HepG2 (cell line): ENCODE measurements at regions of chr11 and their contacts with region 1.

Region 1: DNA sequence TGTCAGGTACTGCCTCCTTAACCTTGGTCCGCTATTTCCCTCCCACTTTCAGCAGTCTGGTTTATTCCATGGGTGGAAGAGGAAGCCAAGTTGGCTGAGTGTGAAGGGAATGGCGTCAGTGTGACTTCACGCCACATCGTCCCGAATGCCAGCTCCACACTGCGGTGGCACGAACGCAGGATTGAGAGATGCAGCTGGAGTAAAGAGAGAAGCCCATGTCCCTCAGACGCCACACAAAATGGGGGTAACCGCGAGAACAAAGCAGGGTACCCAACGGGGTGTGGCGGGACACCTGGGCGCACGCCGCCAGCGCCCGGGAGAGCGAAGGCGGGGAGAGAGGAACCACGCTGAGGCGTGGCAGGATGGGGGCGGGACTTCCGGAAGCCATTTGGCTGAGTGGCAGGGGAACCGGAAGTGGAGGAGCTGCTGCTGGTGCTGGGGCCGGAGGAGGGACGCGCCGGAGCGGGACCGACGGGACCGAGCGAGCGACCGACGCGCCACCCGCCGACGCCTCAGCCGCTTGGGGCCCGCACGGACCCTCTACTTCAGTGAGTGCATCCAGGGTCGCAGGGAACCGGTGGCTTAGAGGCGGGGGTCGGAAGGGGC is at the start of gene PAFAH1B2:
- DNase-seq: peak; percentile 88
- ATAC-seq: peak; percentile 96
- H3K4me3 ChIP-seq: peak within 1 kb of the TSS; percentile 86 to 97 (median 94)
- H3K27ac ChIP-seq: peak within 1 kb of the TSS; percentile 62
- H3K4me1 ChIP-seq: peaks cover 29% of the 10 kb centered on the region
- H3K27me3 ChIP-seq: no peaks in the 10 kb centered on the region; a peak in 1 of 5 replicates
- CTCF ChIP-seq: no peak; the same call in 1 of the 2 replicates
- EP300 ChIP-seq: peak in 1 of 2 experiments; percentile 15; a peak in 1 of 4 replicates
- POLR2A ChIP-seq: peak; percentile 56 to 94
- RAD21 ChIP-seq: no peak
- total RNA-seq, gene PAFAH1B2: 104 and 178 TPM in 2 replicates

Region 2: DNA sequence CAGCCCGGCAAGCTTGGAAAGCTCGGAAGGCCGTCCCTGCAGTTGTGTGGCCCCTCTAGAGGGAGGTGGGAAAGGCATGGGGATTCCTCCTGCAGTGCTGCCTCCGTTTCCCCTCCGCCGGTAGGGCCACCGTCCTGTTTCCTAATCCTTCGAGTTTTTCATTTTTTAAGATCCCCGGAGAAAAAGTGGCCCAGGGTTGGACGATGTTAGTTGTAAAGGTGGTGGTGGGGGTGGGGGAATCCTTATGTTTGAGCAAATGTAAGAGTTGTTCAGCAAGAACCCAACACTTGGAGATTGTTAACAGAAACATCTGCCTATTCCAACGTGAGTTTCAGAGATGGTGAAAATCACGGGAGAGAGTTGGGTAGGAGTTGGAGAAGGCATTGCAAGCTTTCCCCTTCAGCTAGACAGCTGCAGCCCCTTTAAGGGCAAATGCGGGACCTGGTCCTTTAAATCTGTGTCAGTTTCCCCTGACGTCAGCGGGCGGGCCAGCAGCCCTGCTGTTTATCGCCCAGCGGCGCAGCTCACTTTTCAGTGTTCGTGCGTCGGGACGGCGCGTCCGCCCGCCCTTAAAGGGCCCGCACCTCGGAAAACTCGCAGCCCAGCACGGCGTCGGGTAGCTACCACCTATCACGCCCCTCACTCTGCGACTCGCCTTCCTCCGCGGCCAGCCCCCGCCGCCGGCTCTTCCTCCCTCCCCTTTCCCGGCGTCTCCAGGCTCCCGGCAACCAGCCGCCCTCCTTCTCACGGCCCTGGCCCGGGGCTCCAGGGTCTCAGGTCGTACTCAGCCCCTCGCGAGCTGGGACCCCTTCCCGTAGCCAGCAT is 34.4 kb after region 1 on chr11 and contains the start of gene SIDT2:
- CTCF ChIA-PET with region 1: no interaction called
- POLR2A ChIA-PET with region 1: interaction called, 41 read pairs
- in situ Hi-C with region 1: no loop called
- intact Hi-C with region 1: no loop called
- DNase-seq: peak; percentile 83
- ATAC-seq: peak; percentile 90
- H3K4me3 ChIP-seq: peak within 1 kb of the TSS; percentile 82 to 97 (median 83)
- H3K27ac ChIP-seq: peak within 1 kb of the TSS; percentile 73
- H3K4me1 ChIP-seq: peaks cover 38% of the 10 kb centered on the region
- H3K27me3 ChIP-seq: no peaks in the 10 kb centered on the region; a peak in 1 of 5 replicates
- CTCF ChIP-seq: no peak
- EP300 ChIP-seq: no peak
- POLR2A ChIP-seq: peak; percentile 51 to 65
- RAD21 ChIP-seq: no peak
- total RNA-seq, gene SIDT2: 6.8 and 11.5 TPM in 2 replicates